ENCODE measurements at regions of chr13 and their contacts with region 1.

Region 1: GRCh38 chr13:45047394-45048310 is 58.3 kb downstream of the GPALPP1 start:
- DNase-seq: peak; percentile 66
- H3K4me3 ChIP-seq: peak overlapping the region; percentile 66
- H3K27ac ChIP-seq: peak overlapping the region; percentile 54
- H3K4me1 ChIP-seq: peaks cover 15% of the 10 kb centered on the region
- H3K27me3 ChIP-seq: no peaks in the 10 kb centered on the region
- CTCF ChIP-seq: peak; percentile 90

Region 2: DNA sequence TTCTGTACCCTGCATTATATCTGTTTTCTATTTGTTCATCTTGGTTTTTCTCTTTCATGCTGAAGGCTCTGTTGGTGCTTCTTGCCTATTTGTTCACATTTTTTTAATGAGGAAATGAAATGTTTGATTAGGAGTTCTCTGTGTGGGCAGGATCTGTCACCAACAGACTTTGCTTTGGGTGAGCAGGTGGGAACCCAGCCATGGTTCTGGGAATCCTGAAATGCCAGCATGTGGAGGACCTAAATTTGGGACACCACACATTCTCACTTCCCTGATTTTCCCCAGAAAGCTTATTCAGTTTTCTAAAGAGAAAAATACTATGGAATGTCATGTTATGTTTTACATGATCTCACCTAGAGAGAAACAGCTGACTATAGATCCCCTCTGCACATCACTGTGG is 259.3 kb after region 1 on chr13:
- intact Hi-C with region 1: loop called (anchors 5 kb)
- DNase-seq: no peak
- H3K4me3 ChIP-seq: no peak overlapping the region
- H3K27ac ChIP-seq: no peak overlapping the region
- H3K4me1 ChIP-seq: peaks cover 23% of the 10 kb centered on the region
- H3K27me3 ChIP-seq: no peaks in the 10 kb centered on the region
- CTCF ChIP-seq: no peak